CD8-positive, alpha-beta T cell (primary cell): ENCODE measurements at regions of chr1 and their contacts with region 1.

Region 1: GRCh38 chr1:48093696-48094528 is 96.7 kb upstream of the TRABD2B start:
- DNase-seq: peak; percentile 45 to 82 (median 72)
- ATAC-seq: peak; percentile 75
- H3K4me3 ChIP-seq: peak overlapping the region in 1 of 2 experiments; percentile 3
- H3K4me3 Mint-ChIP-seq: peak overlapping the region; percentile 72
- H3K27ac ChIP-seq: no peak overlapping the region
- H3K27ac Mint-ChIP-seq: no peak overlapping the region
- H3K4me1 ChIP-seq: no peaks in the 10 kb centered on the region
- H3K4me1 Mint-ChIP-seq: peaks cover 7% of the 10 kb centered on the region
- H3K27me3 ChIP-seq: peaks cover 2 to 3% of the 10 kb centered on the region in 2 experiments
- H3K27me3 Mint-ChIP-seq: peaks cover 48% of the 10 kb centered on the region
- CTCF ChIP-seq: peak; percentile 86

Region 2: DNA sequence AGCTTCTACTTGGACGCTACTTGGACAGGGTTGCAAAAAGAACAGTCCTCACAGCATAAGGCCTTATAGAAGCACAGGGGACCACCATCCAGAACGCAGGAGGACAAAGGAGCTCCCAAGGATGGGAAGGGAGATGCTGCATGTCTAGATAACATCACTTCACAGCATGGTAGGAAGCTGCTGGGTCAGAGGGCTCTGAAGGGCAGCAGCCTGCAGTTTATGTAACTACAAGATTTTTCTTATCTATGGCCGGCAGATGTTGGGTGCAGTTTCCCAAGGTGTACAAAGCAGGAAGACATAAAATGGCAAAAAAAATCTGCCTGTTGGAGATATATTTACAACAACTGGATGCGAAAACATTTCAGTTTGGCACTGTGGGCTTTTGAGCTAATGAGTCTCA is 83.3 kb after region 1 on chr1:
- CTCF ChIA-PET with region 1: no interaction called
- POLR2A ChIA-PET with region 1: no interaction called
- intact Hi-C with region 1: no loop called
- DNase-seq: no peak
- ATAC-seq: no peak
- H3K4me3 ChIP-seq: no peak overlapping the region
- H3K4me3 Mint-ChIP-seq: no peak overlapping the region
- H3K27ac ChIP-seq: no peak overlapping the region
- H3K27ac Mint-ChIP-seq: no peak overlapping the region
- H3K4me1 ChIP-seq: no peaks in the 10 kb centered on the region
- H3K4me1 Mint-ChIP-seq: no peaks in the 10 kb centered on the region
- H3K27me3 ChIP-seq: no peaks in the 10 kb centered on the region
- H3K27me3 Mint-ChIP-seq: peaks cover 26% of the 10 kb centered on the region
- CTCF ChIP-seq: no peak

Region 3: DNA sequence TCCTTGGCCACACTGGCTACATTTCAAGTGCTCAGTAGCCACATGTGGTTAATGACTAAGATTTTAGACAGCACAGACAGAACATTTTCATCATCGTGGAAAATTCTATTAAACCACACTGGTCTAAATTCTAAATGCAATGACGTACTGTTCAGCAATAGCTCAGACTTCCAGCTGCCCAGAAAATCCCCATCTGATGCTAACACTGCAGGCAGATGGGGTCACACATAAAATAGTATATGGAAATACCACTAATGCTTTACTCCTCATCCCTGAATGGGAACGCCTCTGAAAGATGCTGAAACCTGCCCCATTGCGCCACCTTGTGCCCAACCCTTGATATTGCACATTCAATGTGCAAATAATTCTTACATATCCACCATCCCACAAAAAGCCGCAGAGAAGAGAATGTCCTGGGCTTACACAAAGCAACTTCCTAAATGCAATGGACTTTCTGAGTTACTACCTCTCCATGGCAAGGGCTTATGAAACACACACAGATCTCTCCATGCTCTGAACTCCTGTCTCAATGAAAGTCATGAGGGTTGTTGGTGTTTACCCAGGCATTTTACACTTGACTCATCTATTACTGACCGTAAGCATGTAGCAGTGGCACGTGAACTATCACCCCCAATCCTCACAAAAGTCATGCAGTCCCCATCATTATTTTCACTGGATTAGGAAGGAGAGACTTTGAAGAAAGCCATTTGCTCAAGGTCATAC is 108.3 kb after region 1 on chr1:
- CTCF ChIA-PET with region 1: interaction called, 3 read pairs
- POLR2A ChIA-PET with region 1: no interaction called
- intact Hi-C with region 1: loop called in 1 of 2 experiments (anchors 1 kb)
- DNase-seq: peak; percentile 18 to 67 (median 53)
- ATAC-seq: no peak
- H3K4me3 ChIP-seq: no peak overlapping the region
- H3K4me3 Mint-ChIP-seq: no peak overlapping the region
- H3K27ac ChIP-seq: no peak overlapping the region
- H3K27ac Mint-ChIP-seq: no peak overlapping the region
- H3K4me1 ChIP-seq: no peaks in the 10 kb centered on the region
- H3K4me1 Mint-ChIP-seq: no peaks in the 10 kb centered on the region
- H3K27me3 ChIP-seq: no peaks in the 10 kb centered on the region
- H3K27me3 Mint-ChIP-seq: peaks cover 7% of the 10 kb centered on the region
- CTCF ChIP-seq: peak; percentile 95

Region 4: DNA sequence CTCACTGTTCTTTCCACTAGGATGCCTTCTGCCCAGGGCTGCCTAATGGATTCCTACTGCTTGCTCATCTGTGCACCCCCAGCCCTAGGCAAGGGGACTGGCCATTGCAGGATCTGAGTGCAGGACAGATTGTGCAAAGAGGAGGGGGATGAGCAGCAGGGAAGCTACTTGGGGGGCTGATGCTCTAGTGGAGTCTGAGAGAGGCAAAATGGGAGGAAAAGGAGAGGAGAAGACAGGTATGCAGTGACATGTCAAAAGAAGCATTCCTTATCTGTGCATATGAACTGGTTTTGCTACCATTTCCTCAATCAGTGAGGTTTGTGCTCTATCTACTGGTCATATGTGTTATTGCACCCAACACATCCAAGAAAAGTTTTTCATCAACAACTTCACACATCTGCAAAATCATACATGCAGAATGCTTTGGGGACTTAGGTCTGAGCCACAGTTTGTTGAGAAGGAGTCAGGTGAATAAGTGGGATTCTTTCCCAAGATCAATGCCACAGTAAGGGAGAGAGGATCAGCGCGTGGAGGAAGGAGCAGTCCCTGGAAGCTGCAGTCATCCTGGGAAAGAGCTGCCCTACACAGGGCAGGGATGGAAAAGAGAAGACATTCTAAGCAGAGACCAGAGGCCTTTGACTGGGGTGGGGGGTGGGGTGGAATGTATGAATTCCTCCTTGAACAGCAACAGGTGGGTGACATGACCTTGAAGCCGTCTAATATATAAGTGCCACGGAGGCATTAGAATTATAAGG is 143.0 kb after region 1 on chr1:
- CTCF ChIA-PET with region 1: interaction called, 65 read pairs
- POLR2A ChIA-PET with region 1: no interaction called
- intact Hi-C with region 1: loop called in 1 of 2 experiments (anchors 1 kb)
- DNase-seq: peak in 2 of 9 experiments; percentile 53 to 63
- ATAC-seq: peak; percentile 34
- H3K4me3 ChIP-seq: no peak overlapping the region
- H3K4me3 Mint-ChIP-seq: no peak overlapping the region
- H3K27ac ChIP-seq: no peak overlapping the region
- H3K27ac Mint-ChIP-seq: no peak overlapping the region
- H3K4me1 ChIP-seq: no peaks in the 10 kb centered on the region
- H3K4me1 Mint-ChIP-seq: no peaks in the 10 kb centered on the region
- H3K27me3 ChIP-seq: no peaks in the 10 kb centered on the region
- H3K27me3 Mint-ChIP-seq: no peaks in the 10 kb centered on the region
- CTCF ChIP-seq: peak; percentile 79